Activated naive CD8-positive, alpha-beta T cell treated with anti-CD3 and anti-CD28 coated beads, Interleukin-2, amount 10 ng/mL, durations not matched to agents 7 days and 5 days (primary cell): ENCODE measurements at regions of chr10 and their contacts with region 1.

Region 1: GRCh38 chr10:67779465-67780203 is 58.4 kb downstream of the DNAJC12 start:
- DNase-seq: no peak
- ATAC-seq: peak; percentile 65
- H3K4me3 Mint-ChIP-seq: no peak overlapping the region
- H3K27ac Mint-ChIP-seq: peak overlapping the region; percentile 7
- H3K4me1 Mint-ChIP-seq: peaks cover 40% of the 10 kb centered on the region
- H3K27me3 Mint-ChIP-seq: no peaks in the 10 kb centered on the region

Region 2: DNA sequence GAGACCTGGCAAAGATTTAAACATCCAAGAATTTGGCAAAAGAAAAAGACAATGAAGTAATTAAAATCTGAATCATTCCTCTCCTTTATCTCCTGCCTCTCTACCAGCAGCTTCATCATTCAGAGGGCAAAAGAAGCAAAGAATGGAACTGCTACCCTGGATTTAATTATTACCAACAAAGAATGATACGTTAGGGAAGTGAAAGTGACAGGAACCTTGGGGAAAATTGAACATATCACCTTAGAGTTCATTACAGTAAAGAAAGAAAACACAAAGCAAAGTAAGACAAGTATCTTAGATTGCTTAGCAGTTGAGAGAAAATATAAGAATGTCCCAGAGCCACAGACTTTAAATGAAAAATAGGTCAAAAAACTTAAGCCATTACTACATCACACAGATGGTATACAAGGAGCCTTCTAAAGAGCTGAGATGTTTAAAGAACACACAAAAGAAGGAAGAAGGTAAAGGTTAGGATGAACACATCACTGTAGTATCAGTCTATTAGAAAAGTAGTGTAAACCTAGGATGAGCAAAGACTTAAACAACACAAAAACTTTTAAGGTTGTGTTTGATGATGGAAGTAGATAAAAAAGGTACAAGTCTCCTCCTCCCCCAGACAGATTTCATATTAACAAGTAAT is 101.2 kb before region 1 on chr10:
- POLR2A ChIA-PET with region 1: no interaction called
- DNase-seq: no peak
- ATAC-seq: no peak
- H3K4me3 Mint-ChIP-seq: no peak overlapping the region
- H3K27ac Mint-ChIP-seq: no peak overlapping the region
- H3K4me1 Mint-ChIP-seq: no peaks in the 10 kb centered on the region
- H3K27me3 Mint-ChIP-seq: peaks cover 31% of the 10 kb centered on the region

Region 3: DNA sequence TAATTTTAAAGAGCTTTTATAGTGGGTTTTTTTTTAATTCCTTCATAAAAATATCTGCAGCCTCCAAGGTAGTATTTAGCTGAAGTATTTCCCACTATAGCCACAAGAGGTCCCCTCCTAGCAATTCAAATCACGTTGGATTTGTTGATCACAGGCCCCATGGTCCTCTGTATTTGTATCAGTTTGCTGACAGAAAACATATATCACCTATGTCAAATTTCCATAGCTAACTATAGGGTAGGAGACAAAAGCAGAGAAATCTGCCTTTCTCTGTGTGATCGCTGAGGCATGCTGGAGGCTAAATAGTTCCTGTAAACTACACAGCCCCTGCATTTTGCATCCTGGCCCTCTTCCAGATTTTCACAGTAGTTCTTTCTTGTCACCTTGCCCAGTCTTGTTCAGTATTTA is 81.9 kb before region 1 on chr10:
- POLR2A ChIA-PET with region 1: interaction called, 17 read pairs
- DNase-seq: no peak
- ATAC-seq: peak; percentile 74
- H3K4me3 Mint-ChIP-seq: no peak overlapping the region
- H3K27ac Mint-ChIP-seq: no peak overlapping the region
- H3K4me1 Mint-ChIP-seq: no peaks in the 10 kb centered on the region
- H3K27me3 Mint-ChIP-seq: peaks cover 32% of the 10 kb centered on the region

Region 4: GRCh38 chr10:67764012-67764822 is 15.4 kb before region 1 on chr10:
- POLR2A ChIA-PET with region 1: interaction called, 14 read pairs
- DNase-seq: peak; percentile 98
- ATAC-seq: peak; percentile 83
- H3K4me3 Mint-ChIP-seq: peak overlapping the region; percentile 94
- H3K27ac Mint-ChIP-seq: peak overlapping the region; percentile 98
- H3K4me1 Mint-ChIP-seq: peaks cover 20% of the 10 kb centered on the region
- H3K27me3 Mint-ChIP-seq: peaks cover 4% of the 10 kb centered on the region

Region 5: DNA sequence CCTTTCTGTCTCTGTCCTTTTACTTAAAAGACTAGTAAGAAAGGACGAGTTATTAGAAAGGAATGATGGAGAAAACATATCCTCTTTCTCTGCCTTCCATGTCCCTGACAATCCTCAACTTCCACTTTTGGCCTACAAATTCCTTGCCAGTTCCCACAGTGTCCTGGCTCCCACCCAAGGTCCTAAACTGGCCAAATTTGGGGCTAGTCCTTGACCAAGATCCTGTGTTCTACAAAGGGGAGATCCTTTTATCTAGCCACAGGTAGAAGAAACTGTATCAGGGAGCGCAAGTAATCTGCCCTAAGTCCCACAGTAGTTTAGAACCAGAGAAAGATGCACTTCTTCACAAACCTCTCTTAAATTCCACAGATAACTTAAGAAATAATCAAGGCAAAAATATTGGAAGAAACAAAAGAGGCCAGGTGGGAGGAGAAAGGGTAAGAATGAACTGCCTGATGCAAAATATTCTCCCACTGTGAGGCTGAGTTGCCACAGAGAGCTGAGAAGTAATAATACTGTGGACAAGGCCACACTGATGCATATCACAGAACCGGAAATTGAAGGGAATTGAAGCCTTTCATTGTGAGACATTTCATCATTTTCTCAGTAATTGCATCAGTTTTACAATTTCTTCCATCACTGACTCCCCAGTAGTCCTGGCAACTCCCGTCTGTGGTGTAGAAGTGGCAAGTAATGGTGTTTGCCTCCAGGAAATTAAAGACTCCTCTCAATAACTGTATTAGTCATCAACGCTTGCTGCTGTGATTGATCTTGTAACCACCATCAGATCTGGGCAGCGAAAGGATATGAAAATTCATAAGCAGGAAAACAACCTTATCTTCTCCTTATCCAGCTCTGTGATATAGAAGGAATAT is 11.1 kb after region 1 on chr10:
- POLR2A ChIA-PET with region 1: no interaction called
- DNase-seq: no peak
- ATAC-seq: peak; percentile 75
- H3K4me3 Mint-ChIP-seq: peak overlapping the region; percentile 59
- H3K27ac Mint-ChIP-seq: peak overlapping the region; percentile 88
- H3K4me1 Mint-ChIP-seq: peaks cover 23% of the 10 kb centered on the region
- H3K27me3 Mint-ChIP-seq: no peaks in the 10 kb centered on the region

Region 6: DNA sequence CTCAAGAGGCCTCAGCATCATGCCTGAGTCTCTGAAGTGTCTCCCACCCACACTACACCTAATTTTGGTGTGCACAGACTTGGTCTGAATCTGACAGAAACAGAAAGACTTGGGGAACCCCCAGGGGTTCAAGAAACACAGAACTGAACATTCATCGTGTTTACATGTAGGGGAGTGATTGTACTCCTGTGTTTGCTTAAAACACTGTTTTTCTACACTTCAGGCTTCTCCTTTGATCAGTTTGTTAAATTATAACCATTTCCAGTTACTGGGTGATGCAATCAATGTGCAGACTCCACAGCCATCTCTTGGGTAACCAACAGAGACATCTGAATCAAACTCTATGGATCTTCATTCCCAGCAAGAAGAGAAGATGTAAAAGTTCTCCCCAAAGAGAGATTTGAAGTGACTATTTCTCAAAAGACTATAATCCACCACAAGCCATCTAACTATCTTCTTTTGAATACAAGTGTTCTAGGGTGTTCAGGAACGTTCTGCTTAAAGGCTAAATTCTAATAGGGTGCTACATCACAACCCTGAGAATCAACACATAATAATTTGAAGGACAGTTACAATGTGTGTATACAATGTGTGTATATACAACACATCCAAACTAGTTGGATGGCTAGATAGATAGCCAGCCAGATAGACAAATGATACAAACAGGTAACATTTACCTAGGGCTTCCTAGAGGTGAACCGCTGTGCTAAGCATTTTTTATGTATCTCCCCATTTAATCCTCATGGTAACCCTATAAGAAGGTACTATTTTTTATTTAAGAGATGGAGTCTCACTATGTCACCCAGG is 24.2 kb after region 1 on chr10:
- POLR2A ChIA-PET with region 1: no interaction called
- DNase-seq: no peak
- ATAC-seq: peak; percentile 47
- H3K4me3 Mint-ChIP-seq: no peak overlapping the region
- H3K27ac Mint-ChIP-seq: no peak overlapping the region
- H3K4me1 Mint-ChIP-seq: peaks cover 9% of the 10 kb centered on the region
- H3K27me3 Mint-ChIP-seq: no peaks in the 10 kb centered on the region

Region 7: DNA sequence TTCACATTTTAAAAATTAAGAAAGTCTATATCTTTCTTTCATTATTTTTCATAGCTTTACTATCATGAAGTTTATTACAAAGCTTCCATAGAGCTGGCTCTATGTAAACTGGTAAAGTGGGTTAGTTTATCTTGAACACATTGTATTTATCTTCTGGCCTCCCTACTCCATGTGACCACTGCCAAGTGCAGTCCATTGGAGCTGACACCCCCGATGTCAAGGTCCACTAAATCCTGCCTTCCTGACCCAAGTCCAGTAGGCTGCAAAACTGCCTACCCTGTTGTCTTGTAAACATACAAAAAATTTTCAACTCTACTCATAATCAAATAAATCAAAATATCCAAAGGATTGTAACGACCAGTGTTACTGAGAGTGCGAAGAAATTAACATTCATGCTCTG is 48.2 kb after region 1 on chr10:
- POLR2A ChIA-PET with region 1: no interaction called
- DNase-seq: no peak
- ATAC-seq: no peak
- H3K4me3 Mint-ChIP-seq: no peak overlapping the region
- H3K27ac Mint-ChIP-seq: peak overlapping the region; percentile 37
- H3K4me1 Mint-ChIP-seq: peaks cover 10% of the 10 kb centered on the region
- H3K27me3 Mint-ChIP-seq: no peaks in the 10 kb centered on the region